Prostate gland (tissue), 2 donors: ENCODE measurements at regions of chr1 and their contacts with region 1.

Region 1: DNA sequence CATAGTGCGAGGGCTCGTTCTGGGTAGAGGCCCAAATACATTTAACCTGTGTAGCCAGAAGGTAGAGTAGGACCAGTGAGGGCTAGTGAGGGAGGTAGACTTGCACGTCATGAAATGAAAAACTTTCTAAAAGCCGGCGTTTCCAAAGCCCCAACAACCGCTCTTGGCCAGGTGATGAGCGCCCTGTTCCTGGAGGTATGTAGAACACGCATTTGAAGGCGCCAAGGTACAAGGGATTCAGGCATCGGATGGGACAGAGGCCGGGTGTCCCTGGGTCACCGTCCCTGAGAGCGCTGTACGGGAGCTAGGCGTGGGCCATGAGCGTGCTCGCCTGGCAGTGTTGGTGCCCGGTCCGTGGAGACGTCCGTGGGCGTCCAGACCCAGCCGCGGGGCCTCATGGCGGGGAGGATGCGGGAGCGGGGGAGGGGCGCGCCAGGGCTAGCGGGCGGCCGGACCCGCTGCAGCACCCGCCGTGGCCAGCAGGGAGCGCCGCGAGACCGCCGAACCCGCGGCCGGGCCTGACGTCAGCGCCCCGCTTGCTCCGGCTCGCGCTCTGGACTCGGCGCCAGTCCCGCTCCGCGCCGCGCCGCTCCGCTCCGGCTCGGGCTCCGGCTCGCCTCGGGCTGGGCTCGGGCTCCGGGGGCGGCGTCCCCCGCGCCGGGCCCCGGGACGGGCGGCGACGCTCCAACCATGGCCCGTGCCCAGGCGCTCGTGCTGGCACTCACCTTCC is at the start of gene PTPRU:
- DNase-seq: peak; percentile 75
- H3K4me3 ChIP-seq: peak within 1 kb of the TSS; percentile 60 to 65
- H3K27ac ChIP-seq: peak within 1 kb of the TSS; percentile 74
- H3K4me1 ChIP-seq: no peaks in the 10 kb centered on the region
- H3K27me3 ChIP-seq: no peaks in the 10 kb centered on the region
- CTCF ChIP-seq: peak; percentile 79 to 99 (median 92)
- POLR2A ChIP-seq: peak; percentile 64
- total RNA-seq, gene PTPRU: 49.9 to 60.5 TPM

Region 2: DNA sequence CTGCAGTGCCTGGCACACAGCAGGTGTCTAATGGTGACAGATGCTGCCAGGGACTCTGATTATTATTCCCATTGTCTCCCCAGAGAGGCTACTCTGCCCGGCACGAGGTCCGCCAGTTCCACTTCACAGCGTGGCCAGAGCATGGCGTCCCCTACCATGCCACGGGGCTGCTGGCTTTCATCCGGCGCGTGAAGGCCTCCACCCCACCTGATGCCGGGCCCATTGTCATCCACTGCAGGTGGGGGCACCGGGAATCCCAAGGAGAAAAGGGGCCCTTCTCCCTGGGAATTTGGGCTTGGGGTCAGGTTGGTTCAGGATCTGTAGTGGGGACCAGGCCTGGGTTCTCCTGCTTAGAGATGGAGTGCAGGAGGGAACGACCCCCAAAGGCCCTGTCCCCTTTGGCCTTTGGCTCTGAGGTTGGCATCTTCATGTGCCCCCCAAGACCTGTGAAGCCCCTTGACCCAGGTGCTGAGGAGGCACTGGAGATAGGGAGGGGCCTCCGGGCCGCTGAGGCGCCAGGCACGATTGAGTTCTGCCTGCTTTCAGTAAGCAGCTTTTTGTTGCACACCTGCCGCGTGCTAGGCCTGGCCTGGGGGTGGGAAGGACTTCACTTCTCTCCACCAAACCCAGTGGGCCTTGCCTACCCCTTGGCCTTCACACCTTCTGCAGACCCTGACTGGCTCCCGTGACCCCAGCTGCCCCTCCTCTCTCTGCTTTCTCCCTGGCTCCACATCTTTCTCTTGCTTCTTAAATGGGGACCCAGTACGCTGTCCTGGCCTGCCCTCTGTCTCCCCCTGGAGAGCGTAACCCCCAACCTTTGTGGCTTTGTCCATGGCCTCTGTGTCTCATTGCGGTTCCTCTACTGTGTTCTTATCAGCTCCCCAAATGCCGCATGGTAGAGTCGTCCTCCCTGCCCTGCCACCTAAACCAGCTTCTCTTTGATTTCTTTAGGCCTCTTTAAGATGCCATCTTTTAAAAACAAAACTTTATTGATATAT is 76.6 kb after region 1 on chr1:
- intact Hi-C with region 1: no loop called
- DNase-seq: no peak
- H3K4me3 ChIP-seq: no peak overlapping the region
- H3K27ac ChIP-seq: no peak overlapping the region
- H3K4me1 ChIP-seq: no peaks in the 10 kb centered on the region
- H3K27me3 ChIP-seq: no peaks in the 10 kb centered on the region
- CTCF ChIP-seq: no peak
- POLR2A ChIP-seq: no peak

Region 3: GRCh38 chr1:29849038-29849750 is 613.1 kb after region 1 on chr1:
- intact Hi-C with region 1: loop called (anchors 5 kb)
- DNase-seq: no peak
- H3K4me3 ChIP-seq: no peak overlapping the region
- H3K27ac ChIP-seq: no peak overlapping the region
- H3K4me1 ChIP-seq: no peaks in the 10 kb centered on the region
- H3K27me3 ChIP-seq: no peaks in the 10 kb centered on the region
- CTCF ChIP-seq: peak in 2 of 4 experiments; percentile 40 to 52
- POLR2A ChIP-seq: no peak

Region 4: DNA sequence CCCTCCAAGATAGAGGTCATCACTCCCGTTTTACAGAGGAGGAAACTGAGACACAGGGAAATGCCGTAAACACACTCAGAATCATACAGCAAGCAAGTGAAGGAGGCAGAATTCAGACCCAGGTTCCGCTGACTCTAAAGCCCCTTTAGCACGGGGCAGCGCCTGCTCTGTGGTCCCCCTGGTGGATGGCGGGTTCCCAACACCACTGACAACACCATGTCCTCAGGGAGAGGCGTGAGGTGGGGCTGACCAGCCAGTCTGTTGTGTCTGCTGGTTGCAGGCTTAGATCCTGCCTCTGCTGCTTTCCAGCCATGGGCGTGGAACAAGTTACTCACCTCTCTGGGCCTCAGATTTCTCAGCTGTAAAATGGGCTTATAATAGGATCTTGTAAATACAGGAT is 870.0 kb after region 1 on chr1:
- intact Hi-C with region 1: loop called (anchors 5 kb)
- DNase-seq: peak; percentile 6
- H3K4me3 ChIP-seq: no peak overlapping the region
- H3K27ac ChIP-seq: no peak overlapping the region
- H3K4me1 ChIP-seq: no peaks in the 10 kb centered on the region
- H3K27me3 ChIP-seq: peaks cover 5% of the 10 kb centered on the region
- CTCF ChIP-seq: peak in 3 of 4 experiments; percentile 19 to 55 (median 23)
- POLR2A ChIP-seq: no peak

Region 5: GRCh38 chr1:30379684-30380624 is 1143.8 kb after region 1 on chr1:
- intact Hi-C with region 1: loop called (anchors 2 kb)
- DNase-seq: peak; percentile 64
- H3K4me3 ChIP-seq: no peak overlapping the region
- H3K27ac ChIP-seq: no peak overlapping the region
- H3K4me1 ChIP-seq: no peaks in the 10 kb centered on the region
- H3K27me3 ChIP-seq: peaks cover 8% of the 10 kb centered on the region
- CTCF ChIP-seq: peak; percentile 52 to 84 (median 71)
- POLR2A ChIP-seq: no peak

Region 6: GRCh38 chr1:30707412-30708360 is 1471.6 kb after region 1 on chr1:
- intact Hi-C with region 1: loop called (anchors 2 kb)
- DNase-seq: peak; percentile 67
- H3K4me3 ChIP-seq: no peak overlapping the region
- H3K27ac ChIP-seq: no peak overlapping the region
- H3K4me1 ChIP-seq: no peaks in the 10 kb centered on the region
- H3K27me3 ChIP-seq: no peaks in the 10 kb centered on the region
- CTCF ChIP-seq: peak in 3 of 4 experiments; percentile 79 to 96 (median 95)
- POLR2A ChIP-seq: no peak